CD4-positive, alpha-beta memory T cell (primary cell): ENCODE measurements at regions of chr7 and their contacts with region 1.

Region 1: DNA sequence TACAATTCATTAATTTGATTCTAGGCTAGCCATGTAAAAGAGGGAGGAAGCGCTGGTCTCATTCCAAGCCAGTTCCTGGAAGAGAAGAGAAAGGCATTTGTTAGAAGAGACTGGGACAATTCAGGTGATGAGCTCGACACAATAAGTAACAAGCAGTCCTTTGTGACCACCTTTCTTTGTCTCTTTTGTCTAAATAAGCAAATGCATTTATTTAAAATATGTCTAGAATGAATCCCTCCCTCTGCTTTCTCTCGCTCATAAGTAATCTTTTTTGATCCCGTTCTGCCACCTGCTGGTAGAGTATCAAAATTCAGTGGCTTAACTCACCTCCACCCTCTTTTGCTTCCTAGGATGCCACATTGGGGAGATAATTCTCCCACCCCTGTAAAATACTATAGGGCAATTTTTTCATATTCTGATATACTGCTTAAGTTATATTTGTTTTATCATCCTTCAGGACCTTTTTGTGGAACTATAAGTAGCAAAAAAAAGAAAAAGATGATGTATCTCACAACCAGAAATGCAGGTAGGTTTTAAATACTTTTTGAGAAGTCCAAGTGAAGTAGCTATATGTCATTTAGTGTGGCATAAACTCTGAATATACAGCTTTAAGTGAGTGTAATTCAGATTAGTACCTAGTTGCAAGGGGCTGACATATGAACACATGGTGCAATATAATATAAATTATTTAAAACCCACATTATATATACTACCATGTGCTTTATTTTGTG is 91.5 kb downstream of the GSDME start:
- DNase-seq: peak; percentile 31 to 47 (median 42)
- H3K4me3 ChIP-seq: no peak overlapping the region
- H3K4me3 Mint-ChIP-seq: no peak overlapping the region
- H3K27ac ChIP-seq: no peak overlapping the region
- H3K27ac Mint-ChIP-seq: no peak overlapping the region
- H3K4me1 ChIP-seq: no peaks in the 10 kb centered on the region
- H3K4me1 Mint-ChIP-seq: no peaks in the 10 kb centered on the region
- H3K27me3 ChIP-seq: no peaks in the 10 kb centered on the region
- H3K27me3 Mint-ChIP-seq: no peaks in the 10 kb centered on the region

Region 2: DNA sequence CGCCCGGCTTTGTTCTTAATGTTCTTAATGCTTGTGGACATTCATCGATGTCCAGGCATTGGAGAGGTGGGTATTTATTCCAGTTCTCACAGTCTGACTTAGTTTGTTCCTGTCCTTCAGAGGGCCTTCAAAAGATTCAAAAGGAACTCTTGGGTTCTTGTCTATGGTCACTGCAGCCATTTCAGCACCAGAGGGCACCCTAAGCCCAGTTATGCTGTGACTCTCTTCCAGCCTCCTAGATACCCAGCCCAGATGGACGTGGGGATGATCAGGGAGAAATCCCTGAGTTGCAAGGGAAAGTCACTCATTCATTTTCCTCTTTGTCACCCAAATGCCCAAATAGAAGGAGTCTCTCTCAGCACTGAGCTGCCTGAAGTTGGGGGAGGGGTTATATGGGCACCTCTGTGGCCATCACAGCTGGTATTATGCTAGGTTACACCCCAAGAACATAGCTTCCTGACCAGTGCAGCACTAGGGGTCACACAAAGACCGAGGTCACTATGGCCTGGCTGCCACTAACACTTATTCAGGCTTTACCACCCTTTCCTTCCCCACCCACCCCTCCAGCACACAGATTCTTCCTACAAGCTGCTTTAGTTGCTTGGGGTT is 1095.0 kb before region 1 on chr7:
- CTCF ChIA-PET with region 1: interaction called, 35 read pairs
- POLR2A ChIA-PET with region 1: no interaction called
- intact Hi-C with region 1: loop called (anchors 1 kb)
- DNase-seq: peak; percentile 44 to 65 (median 57)
- H3K4me3 ChIP-seq: no peak overlapping the region
- H3K4me3 Mint-ChIP-seq: peak overlapping the region in 2 of 8 donors; percentile 3 to 25
- H3K27ac ChIP-seq: no peak overlapping the region
- H3K27ac Mint-ChIP-seq: peak overlapping the region in 1 of 7 donors; percentile 5
- H3K4me1 ChIP-seq: no peaks in the 10 kb centered on the region
- H3K4me1 Mint-ChIP-seq: peaks cover 0 to 3% (median under 1%) of the 10 kb centered on the region in 4 donors
- H3K27me3 ChIP-seq: no peaks in the 10 kb centered on the region
- H3K27me3 Mint-ChIP-seq: peaks cover 10 to 14% of the 10 kb centered on the region in 2 donors

Region 3: GRCh38 chr7:23696916-23697441 is 968.8 kb before region 1 on chr7:
- CTCF ChIA-PET with region 1: interaction called, 22 read pairs
- POLR2A ChIA-PET with region 1: no interaction called
- intact Hi-C with region 1: loop called (anchors 1 kb)
- DNase-seq: peak; percentile 30 to 49 (median 38)
- H3K4me3 ChIP-seq: no peak overlapping the region
- H3K4me3 Mint-ChIP-seq: peak overlapping the region in 1 of 8 donors; percentile 44
- H3K27ac ChIP-seq: no peak overlapping the region
- H3K27ac Mint-ChIP-seq: peak overlapping the region in 3 of 7 donors; percentile 19 to 62 (median 36)
- H3K4me1 ChIP-seq: no peaks in the 10 kb centered on the region
- H3K4me1 Mint-ChIP-seq: peaks cover 0 to 6% (median 3%) of the 10 kb centered on the region in 4 donors
- H3K27me3 ChIP-seq: no peaks in the 10 kb centered on the region
- H3K27me3 Mint-ChIP-seq: no peaks in the 10 kb centered on the region

Region 4: GRCh38 chr7:23863209-23863798 is 802.4 kb before region 1 on chr7:
- CTCF ChIA-PET with region 1: interaction called, 10 read pairs
- POLR2A ChIA-PET with region 1: no interaction called
- intact Hi-C with region 1: loop called (anchors 1 kb)
- DNase-seq: peak in 4 of 5 donors; percentile 4 to 11 (median 9)
- H3K4me3 ChIP-seq: no peak overlapping the region
- H3K4me3 Mint-ChIP-seq: no peak overlapping the region
- H3K27ac ChIP-seq: no peak overlapping the region
- H3K27ac Mint-ChIP-seq: no peak overlapping the region
- H3K4me1 ChIP-seq: no peaks in the 10 kb centered on the region
- H3K4me1 Mint-ChIP-seq: peaks cover 0 to 1% (median 0%) of the 10 kb centered on the region in 4 donors
- H3K27me3 ChIP-seq: no peaks in the 10 kb centered on the region
- H3K27me3 Mint-ChIP-seq: peaks cover 0 to 2% of the 10 kb centered on the region in 2 donors

Region 5: DNA sequence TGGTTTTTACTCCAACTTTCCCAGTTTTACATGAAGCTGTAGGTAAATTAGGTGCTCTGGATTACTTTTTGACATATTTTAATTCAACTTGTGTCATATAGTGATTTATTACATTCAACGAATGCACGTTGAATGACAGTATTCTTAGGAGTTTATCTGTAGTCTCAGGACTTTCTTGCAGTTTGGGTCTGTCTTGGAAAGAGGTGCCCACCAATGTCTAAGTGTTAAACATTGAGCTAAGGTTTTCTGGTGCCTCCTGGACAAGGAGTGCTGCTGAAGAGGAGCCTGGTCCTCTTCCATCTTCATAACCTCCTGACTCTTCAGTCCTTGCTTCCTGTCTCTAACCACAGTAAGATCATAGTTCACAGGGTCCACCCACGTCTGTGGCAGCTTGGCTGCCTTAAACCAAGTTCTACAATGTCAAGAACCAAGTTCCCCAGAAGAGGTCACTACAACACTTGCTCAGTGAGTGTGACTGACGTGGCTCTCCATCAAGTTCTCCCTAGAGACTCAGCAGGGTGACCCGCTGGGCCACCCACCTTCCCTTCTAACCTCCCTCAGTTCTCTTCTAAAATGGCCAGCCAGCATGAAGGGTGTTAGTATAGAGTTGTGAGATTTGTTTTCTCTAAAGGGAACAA is 375.6 kb before region 1 on chr7:
- CTCF ChIA-PET with region 1: interaction called, 4 read pairs
- POLR2A ChIA-PET with region 1: no interaction called
- intact Hi-C with region 1: loop called (anchors 1 kb)
- DNase-seq: peak in 4 of 5 donors; percentile 24 to 37 (median 32)
- H3K4me3 ChIP-seq: no peak overlapping the region
- H3K4me3 Mint-ChIP-seq: no peak overlapping the region
- H3K27ac ChIP-seq: no peak overlapping the region
- H3K27ac Mint-ChIP-seq: no peak overlapping the region
- H3K4me1 ChIP-seq: peaks cover 13% of the 10 kb centered on the region
- H3K4me1 Mint-ChIP-seq: peaks cover 6 to 13% (median 7%) of the 10 kb centered on the region in 4 donors
- H3K27me3 ChIP-seq: peaks cover 7% of the 10 kb centered on the region
- H3K27me3 Mint-ChIP-seq: peaks cover 23 to 25% of the 10 kb centered on the region in 2 donors

Region 6: GRCh38 chr7:24401628-24402593 is 263.8 kb before region 1 on chr7:
- CTCF ChIA-PET with region 1: no interaction called
- POLR2A ChIA-PET with region 1: no interaction called
- intact Hi-C with region 1: loop called (anchors 1 kb)
- DNase-seq: peak in 4 of 5 donors; percentile 8 to 17 (median 12)
- H3K4me3 ChIP-seq: no peak overlapping the region
- H3K4me3 Mint-ChIP-seq: peak overlapping the region in 1 of 8 donors; percentile 26
- H3K27ac ChIP-seq: no peak overlapping the region
- H3K27ac Mint-ChIP-seq: no peak overlapping the region
- H3K4me1 ChIP-seq: peaks cover 9% of the 10 kb centered on the region
- H3K4me1 Mint-ChIP-seq: peaks cover 7 to 11% (median 8%) of the 10 kb centered on the region in 4 donors
- H3K27me3 ChIP-seq: no peaks in the 10 kb centered on the region
- H3K27me3 Mint-ChIP-seq: peaks cover 0 to 6% of the 10 kb centered on the region in 2 donors

Region 7: GRCh38 chr7:24685708-24686107 is 20.0 kb after region 1 on chr7:
- CTCF ChIA-PET with region 1: no interaction called
- POLR2A ChIA-PET with region 1: no interaction called
- intact Hi-C with region 1: no loop called
- DNase-seq: no peak
- H3K4me3 ChIP-seq: no peak overlapping the region
- H3K4me3 Mint-ChIP-seq: no peak overlapping the region
- H3K27ac ChIP-seq: no peak overlapping the region
- H3K27ac Mint-ChIP-seq: peak overlapping the region in 1 of 7 donors; percentile 59
- H3K4me1 ChIP-seq: no peaks in the 10 kb centered on the region
- H3K4me1 Mint-ChIP-seq: peaks cover 0 to 2% (median under 1%) of the 10 kb centered on the region in 4 donors
- H3K27me3 ChIP-seq: no peaks in the 10 kb centered on the region
- H3K27me3 Mint-ChIP-seq: no peaks in the 10 kb centered on the region